ENCODE measurements at regions of chr6 and their contacts with region 1.

Region 1: GRCh38 chr6:132820629-132821381 is 6.4 kb downstream of the RPS12 start:
- DNase-seq: peak; percentile 33
- ATAC-seq: peak; percentile 44
- H3K4me3 ChIP-seq: no peak overlapping the region
- H3K27ac ChIP-seq: no peak overlapping the region
- H3K4me1 ChIP-seq: peaks cover 16% of the 10 kb centered on the region
- H3K27me3 ChIP-seq: no peaks in the 10 kb centered on the region
- CTCF ChIP-seq: no peak

Region 2: GRCh38 chr6:132537145-132537544 is 283.7 kb before region 1 on chr6:
- CTCF ChIA-PET with region 1: interaction called, 15 read pairs
- POLR2A ChIA-PET with region 1: no interaction called
- intact Hi-C with region 1: no loop called
- DNase-seq: no peak
- ATAC-seq: no peak
- H3K4me3 ChIP-seq: no peak overlapping the region
- H3K27ac ChIP-seq: no peak overlapping the region
- H3K4me1 ChIP-seq: no peaks in the 10 kb centered on the region
- H3K27me3 ChIP-seq: no peaks in the 10 kb centered on the region
- CTCF ChIP-seq: no peak

Region 3: DNA sequence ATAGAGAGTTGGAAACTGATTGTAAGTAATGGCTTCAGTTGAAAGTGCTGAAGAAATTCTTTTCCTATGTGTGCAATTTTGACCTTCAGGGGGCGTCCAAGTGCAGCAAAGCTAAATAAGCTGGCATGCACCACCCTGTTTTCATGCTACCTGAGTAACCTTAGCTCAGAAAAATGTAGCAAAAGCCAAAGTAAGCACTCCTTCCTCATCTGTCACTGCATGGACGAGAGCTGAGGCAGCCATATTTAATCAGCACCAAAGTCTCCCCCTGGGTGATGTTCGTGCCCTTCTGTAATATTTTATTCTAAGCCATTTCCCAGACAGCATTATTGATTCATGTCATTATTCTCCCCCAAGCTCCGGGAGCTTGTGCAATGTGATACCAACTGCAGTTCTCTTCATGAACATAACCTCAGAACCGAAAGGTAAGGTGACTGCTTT is 116.7 kb after region 1 on chr6:
- CTCF ChIA-PET with region 1: no interaction called
- POLR2A ChIA-PET with region 1: no interaction called
- intact Hi-C with region 1: loop called (anchors 10 kb)
- DNase-seq: peak; percentile 83
- ATAC-seq: peak; percentile 68
- H3K4me3 ChIP-seq: no peak overlapping the region
- H3K27ac ChIP-seq: no peak overlapping the region
- H3K4me1 ChIP-seq: peaks cover 9% of the 10 kb centered on the region
- H3K27me3 ChIP-seq: no peaks in the 10 kb centered on the region
- CTCF ChIP-seq: peak; percentile 75

Region 4: GRCh38 chr6:133055441-133055966 is 234.7 kb after region 1 on chr6:
- CTCF ChIA-PET with region 1: no interaction called
- POLR2A ChIA-PET with region 1: no interaction called
- intact Hi-C with region 1: no loop called
- DNase-seq: no peak
- ATAC-seq: no peak
- H3K4me3 ChIP-seq: no peak overlapping the region
- H3K27ac ChIP-seq: no peak overlapping the region
- H3K4me1 ChIP-seq: no peaks in the 10 kb centered on the region
- H3K27me3 ChIP-seq: no peaks in the 10 kb centered on the region
- CTCF ChIP-seq: no peak

Region 5: DNA sequence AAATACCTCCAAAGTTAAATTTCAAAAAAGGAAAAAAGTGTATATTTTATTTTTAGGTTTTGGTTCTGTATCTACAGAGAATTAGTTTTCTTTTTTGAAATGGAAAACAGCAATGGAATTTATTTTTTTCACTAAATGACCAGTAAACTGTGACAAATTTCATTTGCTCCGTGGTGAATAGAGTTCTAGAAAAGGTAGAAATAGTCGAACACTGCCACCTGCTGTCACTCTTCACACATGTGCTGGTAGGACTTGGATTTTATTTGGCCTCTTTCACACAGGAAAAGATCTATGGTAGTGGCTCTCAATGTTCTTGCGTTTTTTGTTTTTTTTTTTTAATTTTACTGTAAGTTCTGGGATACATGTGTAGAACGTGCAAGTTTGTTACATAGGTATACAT is 732.8 kb after region 1 on chr6:
- CTCF ChIA-PET with region 1: no interaction called
- POLR2A ChIA-PET with region 1: no interaction called
- intact Hi-C with region 1: loop called (anchors 2 kb)
- DNase-seq: peak; percentile 66
- ATAC-seq: peak; percentile 64
- H3K4me3 ChIP-seq: no peak overlapping the region
- H3K27ac ChIP-seq: no peak overlapping the region
- H3K4me1 ChIP-seq: peaks cover 11% of the 10 kb centered on the region
- H3K27me3 ChIP-seq: no peaks in the 10 kb centered on the region
- CTCF ChIP-seq: peak; percentile 66

Measured in PC-3 (cell line).